Activated CD8-positive, alpha-beta memory T cell treated with anti-CD3 and anti-CD28 coated beads, Interleukin-2, amount 10 ng/mL, durations not matched to agents 7 days and 5 days (primary cell): ENCODE measurements at regions of chr3 and their contacts with region 1.

Region 1: DNA sequence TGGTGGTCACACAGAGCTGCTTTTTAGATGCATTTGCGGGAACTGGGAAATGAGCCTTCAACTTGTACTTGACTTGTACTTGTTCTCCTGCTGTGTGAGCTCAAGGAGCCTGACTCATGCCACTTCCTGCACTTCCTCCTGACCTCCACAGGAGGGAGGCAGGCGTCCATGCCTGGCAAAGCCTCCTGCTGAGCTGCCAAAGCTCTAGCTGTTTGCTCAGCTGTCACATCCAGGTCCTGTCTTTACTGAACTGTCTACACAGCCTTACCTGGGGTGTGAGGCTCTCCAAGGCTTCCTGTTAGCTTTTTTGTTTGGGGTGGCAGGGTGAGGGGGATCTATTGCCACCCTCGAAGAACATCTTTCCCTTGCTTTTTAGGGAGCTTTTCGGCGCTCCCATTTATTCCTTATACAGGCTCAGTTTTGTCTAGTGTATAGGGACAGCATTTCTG is 6.4 kb downstream of the THPO start:
- DNase-seq: peak; percentile 78
- ATAC-seq: peak; percentile 99
- H3K4me3 Mint-ChIP-seq: no peak overlapping the region
- H3K27ac Mint-ChIP-seq: no peak overlapping the region
- H3K4me1 Mint-ChIP-seq: peaks cover 9% of the 10 kb centered on the region
- H3K27me3 Mint-ChIP-seq: peaks cover 24% of the 10 kb centered on the region

Region 2: DNA sequence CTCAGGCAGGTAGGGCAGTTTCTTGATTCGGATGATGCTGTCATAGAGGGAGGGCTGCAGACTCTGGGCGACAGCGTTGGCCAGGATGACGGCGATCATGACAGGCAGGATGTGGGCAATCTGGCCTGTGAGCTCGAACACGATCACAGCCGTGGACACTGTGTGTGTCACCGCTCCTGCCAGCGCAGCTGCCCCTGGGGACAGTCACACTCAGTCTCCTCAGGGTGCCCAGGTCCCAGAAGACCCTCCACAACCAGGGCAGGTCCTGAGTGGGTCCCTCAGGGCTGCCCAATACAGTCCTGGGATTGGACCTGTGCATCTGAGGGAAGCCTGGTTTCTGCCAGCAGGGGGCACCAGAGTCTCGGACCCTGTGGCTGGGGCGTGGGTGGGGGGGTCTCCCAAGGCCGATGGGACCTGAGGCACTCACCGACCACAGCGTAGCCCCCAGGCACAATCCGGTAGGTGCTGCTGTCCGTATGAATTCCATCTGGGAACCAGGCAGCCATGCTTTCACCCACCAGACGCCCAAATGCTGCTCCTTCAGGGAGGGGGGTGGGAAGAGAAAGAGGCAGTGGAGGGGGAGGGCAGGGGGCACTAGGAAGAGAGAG is 17.4 kb before region 1 on chr3:
- CTCF ChIA-PET with region 1: interaction called, 13 read pairs
- DNase-seq: peak; percentile 72
- ATAC-seq: peak; percentile 81
- H3K4me3 Mint-ChIP-seq: no peak overlapping the region
- H3K27ac Mint-ChIP-seq: peak overlapping the region; percentile 8
- H3K4me1 Mint-ChIP-seq: peaks cover 5% of the 10 kb centered on the region
- H3K27me3 Mint-ChIP-seq: no peaks in the 10 kb centered on the region

Region 3: GRCh38 chr3:184417619-184418327 is 46.2 kb after region 1 on chr3:
- CTCF ChIA-PET with region 1: interaction called, 11 read pairs
- DNase-seq: peak; percentile 72
- ATAC-seq: peak; percentile 96
- H3K4me3 Mint-ChIP-seq: no peak overlapping the region
- H3K27ac Mint-ChIP-seq: no peak overlapping the region
- H3K4me1 Mint-ChIP-seq: peaks cover 2% of the 10 kb centered on the region
- H3K27me3 Mint-ChIP-seq: peaks cover 6% of the 10 kb centered on the region

Region 4: DNA sequence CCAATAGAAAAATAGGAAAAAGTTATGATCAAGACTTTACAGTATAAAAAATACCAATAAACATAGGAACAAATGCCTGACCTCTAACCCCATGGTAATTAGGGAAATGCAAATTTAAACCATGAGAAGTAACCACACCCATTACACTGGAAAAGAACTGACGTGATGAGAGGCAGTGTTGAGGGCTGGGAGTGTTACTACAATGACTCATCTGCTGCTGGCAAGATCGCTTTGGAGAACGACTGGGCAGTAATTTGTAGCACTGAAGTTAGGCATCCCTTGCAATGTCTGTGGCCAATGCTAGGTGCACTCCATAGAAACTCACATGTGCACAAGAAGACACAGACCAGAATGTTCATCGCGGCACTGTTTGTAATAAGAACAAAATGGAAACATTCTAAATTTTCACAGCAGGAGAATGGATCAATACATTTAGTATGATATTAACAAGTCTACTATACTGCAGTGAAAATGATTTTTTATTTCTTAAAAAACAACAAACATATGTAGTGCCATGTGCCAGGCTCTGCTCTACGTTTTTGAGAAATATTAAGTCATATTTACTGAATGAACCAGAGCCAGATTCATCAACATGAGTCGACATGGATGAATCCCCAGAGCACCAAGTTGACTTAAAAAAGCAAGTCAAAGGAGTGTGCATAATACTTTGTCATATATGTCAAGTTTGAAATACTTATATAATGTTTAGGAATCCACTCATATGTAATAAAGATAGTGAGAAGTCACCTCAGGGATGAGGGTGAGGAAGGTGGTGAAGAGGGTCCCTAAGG is 152.4 kb after region 1 on chr3:
- CTCF ChIA-PET with region 1: interaction called, 12 read pairs
- DNase-seq: no peak
- ATAC-seq: peak; percentile 65
- H3K4me3 Mint-ChIP-seq: peak overlapping the region; percentile 25
- H3K27ac Mint-ChIP-seq: no peak overlapping the region
- H3K4me1 Mint-ChIP-seq: peaks cover 15% of the 10 kb centered on the region
- H3K27me3 Mint-ChIP-seq: peaks cover 65% of the 10 kb centered on the region

Region 5: DNA sequence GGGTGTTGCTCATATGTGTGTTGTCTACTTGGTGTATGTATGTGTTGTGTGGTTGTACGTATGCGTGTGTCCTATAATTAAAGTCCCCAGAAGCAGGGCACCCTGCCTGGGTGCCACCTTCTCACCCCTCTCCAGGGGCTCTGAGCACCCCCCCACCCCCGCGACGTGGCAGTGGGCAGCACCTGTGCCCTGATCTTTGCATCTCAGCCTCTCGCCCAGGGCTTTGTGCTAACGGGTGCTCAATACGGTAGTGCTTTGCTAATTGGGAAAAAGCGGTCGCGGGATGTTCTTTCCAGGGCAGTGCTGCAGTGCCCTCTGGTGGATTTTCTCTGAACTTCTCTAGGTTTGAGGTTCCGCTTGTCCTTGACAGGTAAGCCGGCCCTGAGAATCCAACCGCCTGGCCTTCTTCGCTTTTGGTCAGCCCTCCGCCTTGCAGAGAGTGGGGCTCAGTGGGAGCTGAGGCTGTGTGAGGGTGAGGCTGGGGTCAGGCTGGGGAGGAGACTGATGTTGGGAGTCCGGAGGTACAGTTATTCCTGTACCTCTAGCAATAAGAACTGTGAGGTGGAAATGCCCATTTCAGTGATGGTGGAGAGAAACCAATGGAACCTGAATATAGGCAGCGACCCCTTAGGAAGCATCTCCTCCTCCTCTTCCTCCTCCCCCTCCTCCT is 172.4 kb after region 1 on chr3:
- CTCF ChIA-PET with region 1: interaction called, 48 read pairs
- DNase-seq: peak; percentile 83
- ATAC-seq: peak; percentile 77
- H3K4me3 Mint-ChIP-seq: no peak overlapping the region
- H3K27ac Mint-ChIP-seq: no peak overlapping the region
- H3K4me1 Mint-ChIP-seq: peaks cover 4% of the 10 kb centered on the region
- H3K27me3 Mint-ChIP-seq: peaks cover 32% of the 10 kb centered on the region